SK-N-SH (cell line): ENCODE measurements at regions of chr1 and their contacts with region 1.

Region 1: GRCh38 chr1:93061895-93062792 is 16.9 kb upstream of the MTF2 start:
- DNase-seq: peak; percentile 51
- H3K4me3 ChIP-seq: no peak overlapping the region; a peak in 1 of 4 replicates
- H3K27ac ChIP-seq: no peak overlapping the region
- H3K4me1 ChIP-seq: no peaks in the 10 kb centered on the region
- H3K27me3 ChIP-seq: peaks cover 9% of the 10 kb centered on the region; the same call in 1 of the 2 replicates
- CTCF ChIP-seq: peak; percentile 60
- EP300 ChIP-seq: no peak
- RAD21 ChIP-seq: peak; percentile 71

Region 2: DNA sequence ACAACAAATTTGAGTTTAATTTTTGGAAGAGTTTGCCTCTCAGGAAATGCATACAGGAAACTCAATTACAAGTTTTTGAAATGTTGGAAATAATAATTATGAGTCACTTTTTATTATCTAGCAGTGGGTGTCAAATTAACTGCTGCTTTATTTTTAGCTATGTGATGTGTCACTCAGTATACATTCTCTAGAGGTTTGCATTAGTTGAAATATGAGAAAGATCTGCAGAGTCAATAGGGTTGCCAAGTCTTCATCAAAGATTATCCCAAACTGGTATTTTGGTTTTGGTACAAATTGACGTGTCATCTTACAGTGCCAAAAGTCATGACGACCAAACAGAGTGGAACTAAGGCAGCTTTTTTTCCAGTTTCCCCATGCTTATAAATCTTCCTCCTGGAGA is 46.6 kb before region 1 on chr1:
- CTCF ChIA-PET with region 1: interaction called, 12 read pairs
- POLR2A ChIA-PET with region 1: no interaction called
- DNase-seq: no peak
- H3K4me3 ChIP-seq: no peak overlapping the region
- H3K27ac ChIP-seq: peak overlapping the region in 1 of 2 experiments; percentile 18; a peak in 1 of 4 replicates
- H3K4me1 ChIP-seq: peaks cover 0 to 33% of the 10 kb centered on the region in 2 experiments; a peak in 2 of 4 replicates
- H3K27me3 ChIP-seq: peaks cover 16% of the 10 kb centered on the region; the same call in 1 of the 2 replicates
- CTCF ChIP-seq: no peak
- EP300 ChIP-seq: no peak
- RAD21 ChIP-seq: no peak

Region 3: GRCh38 chr1:93021539-93022134 is 40.5 kb before region 1 on chr1:
- CTCF ChIA-PET with region 1: interaction called, 14 read pairs
- POLR2A ChIA-PET with region 1: no interaction called
- DNase-seq: peak; percentile 54
- H3K4me3 ChIP-seq: no peak overlapping the region; a peak in 1 of 4 replicates
- H3K27ac ChIP-seq: no peak overlapping the region
- H3K4me1 ChIP-seq: no peaks in the 10 kb centered on the region; a peak in 1 of 4 replicates
- H3K27me3 ChIP-seq: peaks cover 16% of the 10 kb centered on the region; the same call in 1 of the 2 replicates
- CTCF ChIP-seq: peak; percentile 82
- EP300 ChIP-seq: no peak
- RAD21 ChIP-seq: peak; percentile 81

Region 4: GRCh38 chr1:93078986-93079654 is 17.0 kb after region 1 on chr1 and contains the start of gene MTF2:
- CTCF ChIA-PET with region 1: interaction called, 4 read pairs
- POLR2A ChIA-PET with region 1: interaction called, 11 read pairs
- DNase-seq: peak; percentile 90
- H3K4me3 ChIP-seq: peak within 1 kb of the TSS; percentile 86 to 87
- H3K27ac ChIP-seq: peak within 1 kb of the TSS; percentile 78 to 96
- H3K4me1 ChIP-seq: peaks cover 0 to 6% of the 10 kb centered on the region in 2 experiments; a peak in 2 of 4 replicates
- H3K27me3 ChIP-seq: no peaks in the 10 kb centered on the region
- CTCF ChIP-seq: no peak
- EP300 ChIP-seq: peak; percentile 74 to 78; a peak in 3 of 4 replicates
- RAD21 ChIP-seq: peak; percentile 18; the same call in 1 of the 2 replicates
- polyA plus RNA-seq, gene MTF2: 11.9 and 15.3 TPM in 2 replicates